Common myeloid progenitor, CD34-positive (primary cell): ENCODE measurements at regions of chr3 and their contacts with region 1.

Region 1: GRCh38 chr3:150408221-150409102 is at the start of gene TSC22D2:
- DNase-seq: peak; percentile 94 to 98 (median 97)
- H3K4me3 ChIP-seq: peak within 1 kb of the TSS; percentile 85 to 97 (median 92)
- H3K27ac ChIP-seq: peak within 1 kb of the TSS; percentile 95 to 97
- H3K4me1 ChIP-seq: peaks cover 23 to 43% (median 30%) of the 10 kb centered on the region in 4 experiments
- H3K27me3 ChIP-seq: no peaks in the 10 kb centered on the region

Region 2: GRCh38 chr3:150286390-150287147 is 121.9 kb before region 1 on chr3:
- CTCF ChIA-PET with region 1: interaction called, 23 read pairs
- POLR2A ChIA-PET with region 1: interaction called, 7 read pairs
- DNase-seq: peak; percentile 67 to 72 (median 68)
- H3K4me3 ChIP-seq: no peak overlapping the region
- H3K27ac ChIP-seq: no peak overlapping the region
- H3K4me1 ChIP-seq: no peaks in the 10 kb centered on the region
- H3K27me3 ChIP-seq: no peaks in the 10 kb centered on the region

Region 3: DNA sequence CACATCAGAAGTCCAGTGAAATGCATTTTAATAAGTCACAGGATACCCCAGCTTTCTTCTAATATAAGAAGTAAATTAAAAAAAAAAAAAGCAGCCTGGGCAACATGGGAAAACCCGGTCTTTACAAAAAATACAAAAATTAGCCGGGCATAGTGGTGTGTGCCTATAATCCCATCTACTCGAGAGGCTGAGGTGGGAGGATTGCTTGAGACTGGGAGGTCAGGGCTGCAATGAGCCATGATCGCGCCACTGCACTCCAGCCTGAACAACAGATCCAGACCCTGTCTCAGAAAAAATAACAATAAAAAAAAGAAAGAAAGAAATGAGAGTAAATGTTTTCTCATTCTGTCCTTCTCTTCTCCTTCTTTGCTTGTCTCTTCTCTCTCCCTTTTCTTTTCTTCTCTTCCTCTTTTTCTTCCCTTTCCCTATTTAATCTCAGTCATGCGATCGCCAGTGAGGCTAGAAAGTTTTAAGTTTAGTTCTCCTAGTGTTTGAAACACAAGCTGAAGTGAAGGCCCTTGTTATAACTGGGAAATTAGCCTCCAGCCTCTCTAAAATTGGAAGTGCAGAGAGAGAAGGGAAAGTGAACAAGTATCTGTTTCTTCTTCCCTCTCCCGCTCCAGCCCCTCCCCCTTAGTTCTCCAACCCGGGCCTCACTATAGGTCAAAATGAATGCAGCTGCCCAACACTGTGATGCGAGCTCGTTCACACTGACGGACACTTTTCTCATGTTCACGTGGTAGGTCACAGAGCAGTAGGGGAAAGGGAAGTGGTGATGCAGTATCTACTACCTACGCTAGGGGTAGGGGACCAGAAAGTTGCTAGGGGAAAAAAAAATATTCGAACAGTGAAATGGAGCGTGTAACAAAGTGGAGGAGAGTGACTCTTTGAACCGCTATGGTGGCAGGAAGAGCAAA is 23.9 kb before region 1 on chr3:
- CTCF ChIA-PET with region 1: interaction called, 11 read pairs
- POLR2A ChIA-PET with region 1: interaction called, 12 read pairs
- DNase-seq: peak; percentile 81 to 90 (median 88)
- H3K4me3 ChIP-seq: peak overlapping the region in 6 of 7 experiments; percentile 4 to 67 (median 39)
- H3K27ac ChIP-seq: no peak overlapping the region
- H3K4me1 ChIP-seq: peaks cover 5 to 19% (median 15%) of the 10 kb centered on the region in 4 experiments
- H3K27me3 ChIP-seq: no peaks in the 10 kb centered on the region

Region 4: DNA sequence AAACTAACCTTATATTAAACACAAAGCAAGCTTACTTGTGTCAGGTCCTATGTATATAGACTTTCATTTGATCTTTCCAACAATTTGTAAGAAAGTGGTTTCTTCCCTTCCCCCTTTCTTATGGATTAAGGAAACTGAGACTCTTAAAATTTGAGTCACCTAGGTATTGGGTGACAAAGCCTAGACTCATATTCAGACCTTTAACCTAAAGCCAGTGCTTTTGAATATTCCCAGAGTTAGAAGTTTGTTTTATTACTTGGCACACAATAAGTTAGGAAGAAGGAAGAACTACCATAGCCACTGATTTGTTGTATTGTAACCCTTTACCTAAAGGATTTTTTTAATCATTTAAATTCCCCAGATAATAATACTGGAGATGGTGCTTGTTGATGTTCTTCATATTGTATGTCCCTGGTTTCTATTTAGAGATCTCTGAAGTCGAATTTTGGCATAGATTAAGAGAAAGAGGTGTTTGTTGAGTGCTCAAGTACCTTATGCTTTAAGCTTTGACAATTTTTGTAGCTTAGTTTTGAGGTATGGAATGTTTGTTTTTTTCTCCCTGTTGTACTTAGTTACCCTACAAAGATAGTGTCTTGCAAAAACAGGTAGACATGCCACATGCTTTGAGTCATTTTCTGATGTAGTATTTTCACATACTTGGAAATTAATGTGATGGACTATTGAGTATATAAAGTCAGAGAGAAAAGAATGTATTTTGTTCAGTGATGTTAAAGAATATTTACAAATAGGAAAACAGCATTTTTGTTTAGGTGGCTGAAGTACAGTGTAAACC is 10.8 kb after region 1 on chr3:
- CTCF ChIA-PET with region 1: interaction called, 26 read pairs
- POLR2A ChIA-PET with region 1: interaction called, 5 read pairs
- DNase-seq: no peak
- H3K4me3 ChIP-seq: no peak overlapping the region
- H3K27ac ChIP-seq: no peak overlapping the region
- H3K4me1 ChIP-seq: peaks cover 0 to 2% (median under 1%) of the 10 kb centered on the region in 4 experiments
- H3K27me3 ChIP-seq: no peaks in the 10 kb centered on the region

Region 5: GRCh38 chr3:150495563-150496168 is 87.2 kb after region 1 on chr3:
- CTCF ChIA-PET with region 1: interaction called, 28 read pairs
- POLR2A ChIA-PET with region 1: interaction called, 4 read pairs
- DNase-seq: peak; percentile 57 to 70 (median 61)
- H3K4me3 ChIP-seq: no peak overlapping the region
- H3K27ac ChIP-seq: no peak overlapping the region
- H3K4me1 ChIP-seq: no peaks in the 10 kb centered on the region
- H3K27me3 ChIP-seq: no peaks in the 10 kb centered on the region

Region 6: GRCh38 chr3:150603153-150603979 is 194.9 kb after region 1 on chr3 and contains the start of gene SELENOT:
- CTCF ChIA-PET with region 1: no interaction called
- POLR2A ChIA-PET with region 1: no interaction called
- DNase-seq: peak; percentile 96 to 97 (median 96)
- H3K4me3 ChIP-seq: peak within 1 kb of the TSS; percentile 41 to 99 (median 86)
- H3K27ac ChIP-seq: peak within 1 kb of the TSS; percentile 94 to 95
- H3K4me1 ChIP-seq: peaks cover 5 to 53% (median 28%) of the 10 kb centered on the region in 4 experiments
- H3K27me3 ChIP-seq: no peaks in the 10 kb centered on the region

Region 7: DNA sequence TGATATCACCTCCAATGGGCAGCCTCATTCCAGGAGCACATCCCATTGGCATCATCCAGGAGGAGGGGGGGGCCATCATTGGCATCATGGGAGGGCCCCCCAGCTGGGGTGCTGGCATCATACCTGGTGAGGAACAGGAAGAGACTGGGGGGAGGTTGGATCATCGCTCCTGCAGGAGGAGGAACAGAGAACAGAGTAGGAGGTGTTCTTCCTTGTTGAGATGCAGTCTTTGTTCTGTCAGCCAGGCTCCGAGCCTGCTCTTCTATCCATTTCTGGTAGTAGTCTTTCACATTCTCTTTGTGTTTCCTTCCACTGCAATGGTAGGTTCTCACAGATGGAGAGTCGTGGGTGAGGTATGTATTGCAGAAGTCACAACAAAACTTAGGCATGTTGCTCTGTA is 312.0 kb after region 1 on chr3:
- CTCF ChIA-PET with region 1: no interaction called
- POLR2A ChIA-PET with region 1: no interaction called
- DNase-seq: no peak
- H3K4me3 ChIP-seq: no peak overlapping the region
- H3K27ac ChIP-seq: no peak overlapping the region
- H3K4me1 ChIP-seq: peaks cover 0 to 5% (median 2%) of the 10 kb centered on the region in 4 experiments
- H3K27me3 ChIP-seq: no peaks in the 10 kb centered on the region